ENCODE measurements at regions of chr3 and their contacts with region 1.

Region 1: DNA sequence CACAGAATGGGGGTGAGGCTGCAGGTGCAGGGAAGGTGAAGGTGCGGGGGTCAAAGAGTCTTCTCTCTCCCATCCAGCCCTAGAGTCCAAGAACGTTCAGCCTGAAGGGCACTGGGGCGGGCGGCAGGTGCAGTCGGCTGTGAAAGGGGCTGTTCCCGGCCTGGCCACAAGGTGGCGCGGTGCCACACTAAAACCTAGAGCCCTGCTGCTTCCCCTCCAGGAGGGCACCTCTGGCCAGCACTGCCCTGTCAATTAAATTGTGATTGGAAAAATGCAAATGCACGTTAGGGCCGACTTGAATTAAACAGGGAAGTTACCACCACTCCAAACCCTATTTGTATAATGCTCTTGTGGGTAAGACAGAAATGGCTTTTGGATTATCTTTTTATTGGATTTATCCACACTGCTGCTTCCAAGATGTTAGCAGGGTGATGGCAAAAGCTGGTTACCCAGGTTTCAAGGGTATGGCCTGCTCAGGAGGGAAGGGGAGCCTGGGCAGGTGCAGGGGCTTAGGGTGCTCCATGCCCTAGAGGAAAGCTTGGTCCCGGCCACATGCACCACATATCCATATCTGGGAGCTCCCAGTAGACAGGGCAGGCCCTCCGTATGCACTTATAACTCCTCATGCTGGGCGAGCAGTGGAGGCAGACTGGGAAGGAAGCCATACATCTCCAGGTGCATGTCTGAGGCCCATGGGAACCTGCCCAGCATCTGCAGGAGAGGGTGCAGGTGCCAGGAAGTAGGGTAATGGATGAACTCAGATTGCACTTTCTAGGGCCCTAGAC is 119.8 kb downstream of the ADCY5 start:
- DNase-seq: peak; percentile 28
- ATAC-seq: peak; percentile 90
- H3K4me3 ChIP-seq: no peak overlapping the region
- H3K27ac ChIP-seq: no peak overlapping the region
- H3K4me1 ChIP-seq: peaks cover 11% of the 10 kb centered on the region; the same call in 1 of the 2 replicates
- H3K27me3 ChIP-seq: peaks cover 0 to 36% of the 10 kb centered on the region in 2 experiments; a peak in 3 of 5 replicates
- CTCF ChIP-seq: peak; percentile 92
- EP300 ChIP-seq: no peak
- POLR2A ChIP-seq: no peak
- RAD21 ChIP-seq: peak; percentile 82

Region 2: DNA sequence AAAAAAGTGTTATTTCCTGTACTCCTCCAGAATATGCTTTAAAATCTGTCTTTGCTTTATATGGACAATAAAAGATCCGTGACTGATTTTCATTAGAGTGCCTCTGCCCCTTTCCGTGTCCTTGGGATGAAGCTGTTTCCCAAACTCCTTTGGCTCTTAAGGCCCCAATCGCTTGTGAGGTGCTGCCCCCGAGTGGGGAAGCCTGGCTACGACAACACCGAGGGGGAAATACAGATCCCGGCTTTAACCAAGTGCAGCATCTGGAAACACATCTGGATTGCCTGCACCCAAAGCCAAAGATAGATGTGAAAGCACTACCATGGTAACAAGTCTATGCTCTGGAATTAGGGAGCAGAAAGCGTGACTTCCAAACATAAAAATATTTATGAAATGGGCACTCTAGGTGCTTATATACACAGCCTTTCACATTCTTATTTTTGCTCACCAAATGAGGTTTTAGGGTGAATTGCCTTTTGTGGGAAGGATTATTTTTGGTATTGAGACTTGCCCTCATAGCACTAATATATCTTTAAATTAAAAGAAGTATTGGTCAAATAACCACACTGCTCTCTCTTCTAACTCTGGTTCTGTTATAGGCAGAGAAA is 160.5 kb after region 1 on chr3:
- CTCF ChIA-PET with region 1: interaction called, 34 read pairs
- POLR2A ChIA-PET with region 1: no interaction called
- in situ Hi-C with region 1: loop called (anchors 5 kb)
- intact Hi-C with region 1: loop called (anchors 1 kb)
- DNase-seq: peak; percentile 27
- ATAC-seq: peak; percentile 71
- H3K4me3 ChIP-seq: no peak overlapping the region
- H3K27ac ChIP-seq: no peak overlapping the region
- H3K4me1 ChIP-seq: peaks cover 13% of the 10 kb centered on the region
- H3K27me3 ChIP-seq: no peaks in the 10 kb centered on the region
- CTCF ChIP-seq: peak; percentile 91
- EP300 ChIP-seq: no peak
- POLR2A ChIP-seq: no peak
- RAD21 ChIP-seq: peak; percentile 87

Region 3: GRCh38 chr3:123559040-123559861 is 230.2 kb after region 1 on chr3:
- CTCF ChIA-PET with region 1: interaction called, 8 read pairs
- POLR2A ChIA-PET with region 1: no interaction called
- in situ Hi-C with region 1: loop called (anchors 5 kb)
- intact Hi-C with region 1: loop called (anchors 2 kb)
- DNase-seq: peak; percentile 39
- ATAC-seq: no peak
- H3K4me3 ChIP-seq: no peak overlapping the region
- H3K27ac ChIP-seq: no peak overlapping the region
- H3K4me1 ChIP-seq: 0 out of 2 replicates have a peak, but pooled peaks cover 6% of the 10 kb centered on the region
- H3K27me3 ChIP-seq: no peaks in the 10 kb centered on the region
- CTCF ChIP-seq: peak; percentile 67
- EP300 ChIP-seq: no peak
- POLR2A ChIP-seq: no peak
- RAD21 ChIP-seq: peak; percentile 23; the same call in 1 of the 2 replicates

Measured in HepG2 (cell line).